Activated CD4-positive, alpha-beta memory T cell treated with anti-CD3 and anti-CD28 coated beads, Interleukin-2, amount 10 ng/mL, durations not matched to agents 7 days and 5 days (primary cell): ENCODE measurements at regions of chr14 and their contacts with region 1.

Region 1: GRCh38 chr14:55051426-55052268 is at the start of gene MAPK1IP1L:
- DNase-seq: peak; percentile 92
- H3K4me3 Mint-ChIP-seq: peak within 1 kb of the TSS; percentile 88
- H3K27ac Mint-ChIP-seq: peak within 1 kb of the TSS; percentile 94
- H3K4me1 Mint-ChIP-seq: peaks cover 38% of the 10 kb centered on the region
- H3K27me3 Mint-ChIP-seq: no peaks in the 10 kb centered on the region
- total RNA-seq, gene MAPK1IP1L: 100 to 104 TPM

Region 2: GRCh38 chr14:54902521-54903420 is 148.9 kb before region 1 on chr14 and contains the start of gene GCH1:
- CTCF ChIA-PET with region 1: interaction called, 3 read pairs
- POLR2A ChIA-PET with region 1: interaction called, 14 read pairs
- DNase-seq: peak; percentile 81
- H3K4me3 Mint-ChIP-seq: peak within 1 kb of the TSS; percentile 85
- H3K27ac Mint-ChIP-seq: peak within 1 kb of the TSS; percentile 92
- H3K4me1 Mint-ChIP-seq: peaks cover 49% of the 10 kb centered on the region
- H3K27me3 Mint-ChIP-seq: no peaks in the 10 kb centered on the region
- total RNA-seq, gene GCH1: 68.7 to 70.3 TPM

Region 3: DNA sequence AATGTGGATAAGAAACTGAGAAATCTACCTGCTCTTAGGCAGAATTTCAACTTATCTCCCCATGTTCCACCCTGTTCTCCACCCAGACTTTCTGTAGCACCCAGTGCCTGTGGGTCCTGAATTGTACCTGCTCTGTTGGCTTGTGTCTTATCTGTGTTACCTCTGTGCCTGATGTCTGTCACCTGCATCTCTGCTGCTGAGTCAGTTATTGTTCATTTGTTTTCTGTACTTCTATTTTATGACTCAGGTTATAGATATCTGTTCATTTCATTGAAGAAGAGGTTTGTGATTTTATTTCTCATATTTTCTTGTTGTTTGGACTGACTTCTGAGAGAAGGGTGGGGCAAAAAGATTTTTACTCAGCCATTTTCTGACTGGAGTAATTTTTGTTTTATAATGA is 12.9 kb before region 1 on chr14:
- CTCF ChIA-PET with region 1: interaction called, 10 read pairs
- POLR2A ChIA-PET with region 1: interaction called, 20 read pairs
- DNase-seq: no peak
- H3K4me3 Mint-ChIP-seq: no peak overlapping the region
- H3K27ac Mint-ChIP-seq: no peak overlapping the region
- H3K4me1 Mint-ChIP-seq: no peaks in the 10 kb centered on the region
- H3K27me3 Mint-ChIP-seq: no peaks in the 10 kb centered on the region

Region 4: GRCh38 chr14:55071870-55072640 is 20.4 kb after region 1 on chr14:
- CTCF ChIA-PET with region 1: interaction called, 29 read pairs
- POLR2A ChIA-PET with region 1: interaction called, 29 read pairs
- DNase-seq: peak; percentile 25
- H3K4me3 Mint-ChIP-seq: no peak overlapping the region
- H3K27ac Mint-ChIP-seq: peak overlapping the region; percentile 40
- H3K4me1 Mint-ChIP-seq: peaks cover 40% of the 10 kb centered on the region
- H3K27me3 Mint-ChIP-seq: no peaks in the 10 kb centered on the region

Region 5: DNA sequence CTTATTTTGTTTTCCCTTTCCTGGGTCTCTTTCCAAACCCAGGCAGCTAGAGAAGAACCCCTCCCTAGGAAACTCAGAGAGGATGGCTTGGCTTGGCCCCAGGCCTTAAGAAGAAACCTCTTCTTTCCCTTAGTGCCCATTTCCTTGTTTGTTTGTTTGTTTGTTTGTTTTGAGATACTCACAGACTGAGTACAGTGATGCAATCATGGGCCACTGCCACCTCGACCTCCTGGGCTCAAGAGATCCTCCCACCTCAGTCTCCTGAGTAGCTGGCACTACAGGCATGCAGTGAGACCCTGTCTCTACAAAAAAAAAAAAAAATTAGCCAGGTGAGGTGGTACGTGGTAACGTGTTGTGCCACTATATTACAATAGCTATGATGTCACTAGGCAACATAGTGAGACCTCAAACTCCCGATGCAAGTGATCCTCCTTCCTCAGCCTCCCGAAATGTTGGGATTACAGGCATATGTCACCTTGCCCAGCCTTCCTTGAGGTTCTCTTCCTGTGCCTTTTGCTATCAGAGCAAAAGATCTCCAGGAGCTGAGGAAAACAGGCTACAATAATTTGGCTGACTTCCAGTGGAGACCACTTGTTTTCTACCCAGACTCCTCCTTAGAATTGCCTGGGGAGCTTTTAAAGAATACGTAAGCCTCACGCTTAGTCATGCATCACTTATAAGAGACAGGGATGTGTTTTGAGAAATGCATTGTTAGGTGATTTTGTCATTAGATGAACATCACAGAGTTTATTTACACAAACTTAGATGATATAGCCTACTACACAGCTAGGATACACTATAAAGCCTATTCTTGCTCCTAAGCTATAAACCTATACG is 42.9 kb after region 1 on chr14:
- CTCF ChIA-PET with region 1: interaction called, 12 read pairs
- POLR2A ChIA-PET with region 1: interaction called, 24 read pairs
- DNase-seq: no peak
- H3K4me3 Mint-ChIP-seq: no peak overlapping the region
- H3K27ac Mint-ChIP-seq: no peak overlapping the region
- H3K4me1 Mint-ChIP-seq: peaks cover 43% of the 10 kb centered on the region
- H3K27me3 Mint-ChIP-seq: no peaks in the 10 kb centered on the region

Region 6: DNA sequence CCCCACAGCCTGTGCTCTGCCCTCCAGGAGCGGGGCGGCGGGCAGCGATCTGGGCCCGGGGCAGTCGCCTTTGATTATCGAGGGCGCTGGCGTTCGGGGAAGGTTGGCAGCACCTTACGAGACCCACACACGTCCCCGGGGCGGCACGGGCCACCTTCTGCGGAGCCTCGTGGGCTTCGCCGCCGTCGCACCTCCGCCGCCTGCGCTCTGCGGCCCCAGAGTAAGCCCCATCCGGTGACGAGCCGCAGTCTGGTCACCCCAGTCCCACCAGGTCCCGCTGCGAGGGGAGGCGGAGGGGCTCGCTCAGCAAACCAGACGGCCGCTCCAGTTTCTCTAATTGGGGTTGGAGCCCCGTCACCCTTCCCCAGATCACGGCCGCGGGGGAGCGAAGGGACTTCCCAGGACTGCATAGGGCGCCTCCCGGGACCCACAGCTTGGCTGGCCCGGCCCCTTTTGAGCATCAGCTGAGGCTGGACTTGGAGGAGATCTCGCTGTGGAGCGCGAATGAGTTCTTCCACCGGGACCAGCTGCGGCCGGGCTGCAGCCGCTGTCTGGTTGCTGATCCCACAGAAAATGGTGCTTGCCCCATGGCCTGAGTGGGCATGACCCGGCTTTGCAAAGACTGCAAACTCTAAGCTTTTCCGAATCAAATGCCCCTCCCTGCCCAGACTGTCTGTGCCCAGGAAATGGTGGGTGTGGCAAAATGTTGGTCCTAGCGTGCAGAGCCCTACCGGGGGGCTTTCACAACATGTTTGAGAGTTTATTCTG is 78.0 kb after region 1 on chr14:
- CTCF ChIA-PET with region 1: interaction called, 7 read pairs
- POLR2A ChIA-PET with region 1: interaction called, 11 read pairs
- DNase-seq: peak; percentile 63
- H3K4me3 Mint-ChIP-seq: peak overlapping the region; percentile 75
- H3K27ac Mint-ChIP-seq: peak overlapping the region; percentile 47
- H3K4me1 Mint-ChIP-seq: peaks cover 58% of the 10 kb centered on the region
- H3K27me3 Mint-ChIP-seq: peaks cover 10% of the 10 kb centered on the region

Region 7: GRCh38 chr14:55191203-55192053 is 139.8 kb after region 1 on chr14 and contains the start of gene DLGAP5:
- CTCF ChIA-PET with region 1: interaction called, 16 read pairs
- POLR2A ChIA-PET with region 1: interaction called, 25 read pairs
- DNase-seq: peak; percentile 95
- H3K4me3 Mint-ChIP-seq: peak within 1 kb of the TSS; percentile 77
- H3K27ac Mint-ChIP-seq: peak within 1 kb of the TSS; percentile 83
- H3K4me1 Mint-ChIP-seq: peaks cover 39% of the 10 kb centered on the region
- H3K27me3 Mint-ChIP-seq: peaks cover 4% of the 10 kb centered on the region
- total RNA-seq, gene DLGAP5: 89.7 to 95.8 TPM